GM12878 (cell line): ENCODE measurements at regions of chr5 and their contacts with region 1.

Region 1: GRCh38 chr5:111530298-111530740 is 18.0 kb upstream of the STARD4 start:
- DNase-seq: peak; percentile 57
- ATAC-seq: peak; percentile 98
- H3K4me3 ChIP-seq: no peak overlapping the region
- H3K27ac ChIP-seq: peak overlapping the region; percentile 37; the same call in 1 of the 2 replicates
- H3K4me1 ChIP-seq: peaks cover 4% of the 10 kb centered on the region
- H3K27me3 ChIP-seq: no peaks in the 10 kb centered on the region
- CTCF ChIP-seq: no peak
- EP300 ChIP-seq: no peak
- POLR2A ChIP-seq: peak; percentile 39; the same call in 1 of the 2 replicates
- RAD21 ChIP-seq: no peak

Region 2: DNA sequence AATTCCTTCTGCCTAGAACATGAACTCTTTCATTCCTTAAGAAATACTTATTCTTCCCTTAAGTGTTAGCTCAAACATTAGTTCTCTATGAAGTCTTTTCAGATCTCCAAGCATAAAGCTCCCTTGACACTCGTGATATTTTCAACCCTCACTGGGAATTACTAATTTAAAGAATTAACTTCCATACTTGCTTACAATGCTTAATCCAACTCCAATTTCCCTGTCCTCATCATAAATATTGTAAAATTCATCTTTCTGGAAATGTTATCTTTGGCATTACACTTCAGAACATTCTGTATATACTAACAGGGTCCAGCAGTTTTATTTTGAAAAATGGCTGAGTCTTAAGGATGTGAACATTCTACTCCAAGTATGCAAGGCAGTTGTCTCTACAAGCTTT is 25.2 kb before region 1 on chr5:
- CTCF ChIA-PET with region 1: interaction called, 29 read pairs
- POLR2A ChIA-PET with region 1: interaction called, 6 read pairs
- RAD21 ChIA-PET with region 1: interaction called, 6 read pairs
- SMC1A ChIA-PET with region 1: interaction called, 49 read pairs
- in situ Hi-C with region 1: no loop called
- intact Hi-C with region 1: no loop called
- DNase-seq: no peak
- ATAC-seq: no peak
- H3K4me3 ChIP-seq: no peak overlapping the region
- H3K27ac ChIP-seq: no peak overlapping the region
- H3K4me1 ChIP-seq: no peaks in the 10 kb centered on the region
- H3K27me3 ChIP-seq: no peaks in the 10 kb centered on the region
- CTCF ChIP-seq: no peak
- EP300 ChIP-seq: no peak
- POLR2A ChIP-seq: no peak
- RAD21 ChIP-seq: no peak

Region 3: GRCh38 chr5:111545031-111545430 is 14.7 kb after region 1 on chr5:
- CTCF ChIA-PET with region 1: interaction called, 28 read pairs
- POLR2A ChIA-PET with region 1: no interaction called
- RAD21 ChIA-PET with region 1: interaction called, 13 read pairs
- SMC1A ChIA-PET with region 1: interaction called, 17 read pairs
- in situ Hi-C with region 1: no loop called
- intact Hi-C with region 1: no loop called
- DNase-seq: no peak
- ATAC-seq: no peak
- H3K4me3 ChIP-seq: no peak overlapping the region
- H3K27ac ChIP-seq: no peak overlapping the region
- H3K4me1 ChIP-seq: no peaks in the 10 kb centered on the region
- H3K27me3 ChIP-seq: no peaks in the 10 kb centered on the region
- CTCF ChIP-seq: no peak
- EP300 ChIP-seq: no peak
- POLR2A ChIP-seq: no peak
- RAD21 ChIP-seq: no peak

Region 4: GRCh38 chr5:111757355-111758283 is 227.3 kb after region 1 on chr5:
- CTCF ChIA-PET with region 1: interaction called, 6 read pairs
- POLR2A ChIA-PET with region 1: no interaction called
- RAD21 ChIA-PET with region 1: interaction called, 10 read pairs
- SMC1A ChIA-PET with region 1: interaction called, 5 read pairs
- in situ Hi-C with region 1: no loop called
- intact Hi-C with region 1: no loop called
- DNase-seq: peak; percentile 66
- ATAC-seq: peak; percentile 85
- H3K4me3 ChIP-seq: peak overlapping the region; percentile 68
- H3K27ac ChIP-seq: peak overlapping the region; percentile 88
- H3K4me1 ChIP-seq: peaks cover 9% of the 10 kb centered on the region; the same call in 1 of the 2 replicates
- H3K27me3 ChIP-seq: no peaks in the 10 kb centered on the region
- CTCF ChIP-seq: peak in 2 of 3 experiments; percentile 29 to 58; a peak in 4 of 6 replicates
- EP300 ChIP-seq: no peak
- POLR2A ChIP-seq: peak; percentile 70
- RAD21 ChIP-seq: 0 out of 2 replicates have a peak, but pooled peaks have one; percentile 22